B cell (primary cell): ENCODE measurements at regions of chr3 and their contacts with region 1.

Region 1: DNA sequence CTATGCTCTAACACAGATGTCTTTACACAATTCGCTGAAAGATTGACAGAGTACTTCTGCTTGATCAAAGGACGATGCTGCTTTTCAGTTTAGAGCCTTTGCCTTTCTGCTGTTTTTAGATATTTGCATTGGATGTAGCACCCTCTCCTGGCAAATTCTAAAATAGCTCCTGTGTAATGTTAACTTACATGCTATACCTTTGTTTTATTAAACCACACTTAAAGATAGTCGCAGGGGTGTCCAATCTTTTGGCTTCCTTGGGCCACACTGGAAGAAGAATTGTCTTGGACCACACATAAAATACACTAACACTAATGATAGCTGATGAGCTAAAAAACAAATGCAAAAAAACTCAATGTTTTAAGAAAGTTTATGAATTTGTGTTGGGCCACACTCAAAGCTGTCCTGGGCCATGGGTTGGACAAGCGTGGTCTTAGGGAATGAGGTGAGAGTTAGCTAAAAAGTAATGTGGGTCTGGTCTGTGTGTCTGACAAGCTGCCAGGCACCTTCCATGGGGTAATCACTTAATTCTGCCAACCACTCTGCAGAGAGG is 62.9 kb downstream of the ATG7 start:
- DNase-seq: peak; percentile 69
- ATAC-seq: peak; percentile 71
- H3K4me3 ChIP-seq: no peak overlapping the region
- H3K4me3 Mint-ChIP-seq: no peak overlapping the region
- H3K27ac ChIP-seq: no peak overlapping the region
- H3K27ac Mint-ChIP-seq: no peak overlapping the region
- H3K4me1 ChIP-seq: no peaks in the 10 kb centered on the region
- H3K4me1 Mint-ChIP-seq: no peaks in the 10 kb centered on the region
- H3K27me3 ChIP-seq: no peaks in the 10 kb centered on the region
- H3K27me3 Mint-ChIP-seq: no peaks in the 10 kb centered on the region
- CTCF ChIP-seq: peak; percentile 74

Region 2: DNA sequence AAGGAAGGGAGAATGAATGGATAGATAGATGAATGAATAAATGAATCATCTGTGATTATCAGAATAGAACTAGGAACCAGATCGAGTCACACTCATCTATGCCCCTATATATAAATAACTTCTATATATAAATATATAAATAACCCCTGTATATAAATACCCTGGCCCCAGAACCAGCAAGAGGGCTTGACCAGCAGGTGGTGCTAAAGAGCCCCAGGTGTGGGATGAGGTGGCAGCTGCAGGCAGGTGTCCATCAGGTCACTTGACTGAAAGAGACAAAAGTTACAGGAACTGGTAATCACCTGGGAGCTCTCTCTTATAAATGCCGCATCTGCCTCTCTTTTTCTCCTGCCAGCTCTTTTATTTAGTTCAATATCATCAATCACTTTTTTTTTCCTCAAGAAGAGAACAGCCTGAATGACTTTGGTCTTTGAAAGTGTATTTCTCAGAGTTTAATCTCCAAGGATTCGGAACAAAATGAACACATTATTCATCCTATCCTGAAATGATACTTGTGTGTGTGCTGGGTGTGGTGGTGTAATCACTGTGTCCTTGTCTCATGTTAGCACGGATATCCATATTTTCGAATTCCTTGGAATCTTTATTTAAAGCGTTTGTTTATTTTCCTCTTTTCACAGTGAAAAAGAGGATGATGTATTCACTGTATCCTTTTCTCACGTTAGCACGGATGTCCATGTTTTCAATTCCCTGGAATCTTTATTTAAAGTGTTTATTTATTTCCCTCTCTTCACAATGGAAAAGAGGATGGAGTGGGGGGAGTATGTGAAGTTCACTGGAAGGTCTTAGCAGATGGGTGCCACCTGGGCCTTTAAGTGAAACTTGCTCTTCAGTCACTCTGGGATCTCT is 98.3 kb before region 1 on chr3:
- CTCF ChIA-PET with region 1: interaction called, 241 read pairs
- POLR2A ChIA-PET with region 1: no interaction called
- intact Hi-C with region 1: loop called (anchors 1 kb)
- DNase-seq: peak; percentile 78
- ATAC-seq: peak; percentile 79
- H3K4me3 ChIP-seq: no peak overlapping the region
- H3K4me3 Mint-ChIP-seq: no peak overlapping the region
- H3K27ac ChIP-seq: no peak overlapping the region
- H3K27ac Mint-ChIP-seq: no peak overlapping the region
- H3K4me1 ChIP-seq: no peaks in the 10 kb centered on the region
- H3K4me1 Mint-ChIP-seq: no peaks in the 10 kb centered on the region
- H3K27me3 ChIP-seq: peaks cover 0 to 5% (median 2%) of the 10 kb centered on the region in 4 experiments
- H3K27me3 Mint-ChIP-seq: peaks cover 30% of the 10 kb centered on the region
- CTCF ChIP-seq: peak; percentile 97

Region 3: DNA sequence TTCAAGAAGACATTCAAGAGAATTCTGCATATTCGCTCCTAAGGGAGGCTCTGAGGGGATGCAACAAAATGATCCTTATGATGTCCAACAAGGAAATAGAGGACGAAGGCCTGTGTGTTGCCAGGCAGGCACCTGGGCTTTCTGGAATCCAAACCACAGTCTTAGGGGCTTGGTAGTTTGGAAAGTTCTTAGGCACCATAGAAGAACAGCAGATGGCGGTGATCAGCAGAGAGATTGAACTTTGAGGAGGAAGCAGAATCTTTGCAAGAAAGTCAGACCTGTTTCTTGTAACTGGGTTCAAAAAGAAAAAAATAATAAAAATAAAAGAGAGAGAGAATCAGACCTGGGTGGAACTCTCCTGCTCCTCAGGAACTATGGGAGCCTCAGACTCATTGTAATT is 74.7 kb before region 1 on chr3:
- CTCF ChIA-PET with region 1: interaction called, 65 read pairs
- POLR2A ChIA-PET with region 1: no interaction called
- intact Hi-C with region 1: loop called (anchors 1 kb)
- DNase-seq: no peak
- ATAC-seq: peak; percentile 10
- H3K4me3 ChIP-seq: no peak overlapping the region
- H3K4me3 Mint-ChIP-seq: no peak overlapping the region
- H3K27ac ChIP-seq: no peak overlapping the region
- H3K27ac Mint-ChIP-seq: no peak overlapping the region
- H3K4me1 ChIP-seq: no peaks in the 10 kb centered on the region
- H3K4me1 Mint-ChIP-seq: no peaks in the 10 kb centered on the region
- H3K27me3 ChIP-seq: peaks cover 0 to 9% (median 2%) of the 10 kb centered on the region in 4 experiments
- H3K27me3 Mint-ChIP-seq: peaks cover 34% of the 10 kb centered on the region
- CTCF ChIP-seq: no peak

Region 4: GRCh38 chr3:11317300-11317699 is 17.8 kb before region 1 on chr3:
- CTCF ChIA-PET with region 1: interaction called, 17 read pairs
- POLR2A ChIA-PET with region 1: no interaction called
- intact Hi-C with region 1: no loop called
- DNase-seq: no peak
- ATAC-seq: no peak
- H3K4me3 ChIP-seq: no peak overlapping the region
- H3K4me3 Mint-ChIP-seq: no peak overlapping the region
- H3K27ac ChIP-seq: no peak overlapping the region
- H3K27ac Mint-ChIP-seq: no peak overlapping the region
- H3K4me1 ChIP-seq: no peaks in the 10 kb centered on the region
- H3K4me1 Mint-ChIP-seq: no peaks in the 10 kb centered on the region
- H3K27me3 ChIP-seq: no peaks in the 10 kb centered on the region
- H3K27me3 Mint-ChIP-seq: no peaks in the 10 kb centered on the region
- CTCF ChIP-seq: no peak

Region 5: GRCh38 chr3:11350374-11350773 is 15.2 kb after region 1 on chr3:
- CTCF ChIA-PET with region 1: interaction called, 14 read pairs
- POLR2A ChIA-PET with region 1: no interaction called
- intact Hi-C with region 1: no loop called
- DNase-seq: no peak
- ATAC-seq: no peak
- H3K4me3 ChIP-seq: no peak overlapping the region
- H3K4me3 Mint-ChIP-seq: no peak overlapping the region
- H3K27ac ChIP-seq: no peak overlapping the region
- H3K27ac Mint-ChIP-seq: no peak overlapping the region
- H3K4me1 ChIP-seq: no peaks in the 10 kb centered on the region
- H3K4me1 Mint-ChIP-seq: no peaks in the 10 kb centered on the region
- H3K27me3 ChIP-seq: no peaks in the 10 kb centered on the region
- H3K27me3 Mint-ChIP-seq: no peaks in the 10 kb centered on the region
- CTCF ChIP-seq: no peak